PC-3 (cell line): ENCODE measurements at regions of chr3 and their contacts with region 1.

Region 1: GRCh38 chr3:171459942-171460724 is at the start of gene TNIK:
- DNase-seq: peak; percentile 88
- ATAC-seq: peak; percentile 82
- H3K4me3 ChIP-seq: peak within 1 kb of the TSS; percentile 84
- H3K27ac ChIP-seq: peak within 1 kb of the TSS; percentile 62
- H3K4me1 ChIP-seq: peaks cover 30% of the 10 kb centered on the region
- H3K27me3 ChIP-seq: no peaks in the 10 kb centered on the region
- CTCF ChIP-seq: no peak
- total RNA-seq, gene TNIK: 7.0 and 12.0 TPM in 2 replicates

Region 2: GRCh38 chr3:170961616-170962400 is 498.3 kb before region 1 on chr3:
- CTCF ChIA-PET with region 1: no interaction called
- POLR2A ChIA-PET with region 1: no interaction called
- intact Hi-C with region 1: loop called (anchors 5 kb)
- DNase-seq: peak; percentile 74
- ATAC-seq: peak; percentile 55
- H3K4me3 ChIP-seq: no peak overlapping the region
- H3K27ac ChIP-seq: no peak overlapping the region
- H3K4me1 ChIP-seq: no peaks in the 10 kb centered on the region
- H3K27me3 ChIP-seq: no peaks in the 10 kb centered on the region
- CTCF ChIP-seq: peak; percentile 91

Region 3: GRCh38 chr3:171261446-171261845 is 198.7 kb before region 1 on chr3:
- CTCF ChIA-PET with region 1: no interaction called
- POLR2A ChIA-PET with region 1: no interaction called
- intact Hi-C with region 1: loop called (anchors 2 kb)
- DNase-seq: peak; percentile 78
- ATAC-seq: peak; percentile 97
- H3K4me3 ChIP-seq: peak overlapping the region; percentile 20
- H3K27ac ChIP-seq: peak overlapping the region; percentile 69
- H3K4me1 ChIP-seq: peaks cover 31% of the 10 kb centered on the region
- H3K27me3 ChIP-seq: no peaks in the 10 kb centered on the region
- CTCF ChIP-seq: no peak

Region 4: DNA sequence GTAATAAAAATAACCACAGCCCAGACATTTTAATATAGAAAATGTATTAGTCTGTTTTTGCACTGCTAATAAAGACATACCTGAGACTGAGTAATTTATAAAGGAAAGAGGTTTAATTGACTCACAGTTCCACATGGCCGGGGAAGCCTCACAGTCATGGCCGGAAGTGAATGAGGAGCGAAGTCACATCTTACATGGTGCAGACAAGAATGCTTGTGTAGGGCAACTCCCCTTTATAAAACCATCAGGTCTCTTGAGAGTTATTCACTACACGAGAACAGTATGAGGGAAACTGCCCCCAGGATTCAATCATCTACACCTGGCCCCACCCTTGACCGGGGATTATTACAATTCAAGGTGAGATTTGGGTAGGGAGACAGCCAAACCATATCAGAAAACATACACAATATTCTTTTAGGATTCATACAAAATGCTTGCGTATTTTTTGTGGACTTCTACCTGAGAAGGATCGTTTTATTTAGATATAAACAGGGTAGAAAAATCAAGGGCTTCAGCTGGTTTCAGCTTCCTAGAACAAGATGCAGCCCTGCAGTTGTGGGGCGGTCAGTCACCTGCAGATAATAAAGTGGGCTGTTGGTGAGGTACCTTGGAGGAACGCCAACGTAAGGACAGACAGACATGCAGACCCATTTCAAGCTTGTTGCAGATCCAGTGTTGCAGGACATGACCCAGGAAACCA is 101.8 kb before region 1 on chr3:
- CTCF ChIA-PET with region 1: no interaction called
- POLR2A ChIA-PET with region 1: no interaction called
- intact Hi-C with region 1: loop called (anchors 5 kb)
- DNase-seq: peak; percentile 65
- ATAC-seq: peak; percentile 8; the same call in 1 of the 2 replicates
- H3K4me3 ChIP-seq: no peak overlapping the region
- H3K27ac ChIP-seq: peak overlapping the region; percentile 88
- H3K4me1 ChIP-seq: peaks cover 53% of the 10 kb centered on the region
- H3K27me3 ChIP-seq: no peaks in the 10 kb centered on the region
- CTCF ChIP-seq: no peak

Region 5: DNA sequence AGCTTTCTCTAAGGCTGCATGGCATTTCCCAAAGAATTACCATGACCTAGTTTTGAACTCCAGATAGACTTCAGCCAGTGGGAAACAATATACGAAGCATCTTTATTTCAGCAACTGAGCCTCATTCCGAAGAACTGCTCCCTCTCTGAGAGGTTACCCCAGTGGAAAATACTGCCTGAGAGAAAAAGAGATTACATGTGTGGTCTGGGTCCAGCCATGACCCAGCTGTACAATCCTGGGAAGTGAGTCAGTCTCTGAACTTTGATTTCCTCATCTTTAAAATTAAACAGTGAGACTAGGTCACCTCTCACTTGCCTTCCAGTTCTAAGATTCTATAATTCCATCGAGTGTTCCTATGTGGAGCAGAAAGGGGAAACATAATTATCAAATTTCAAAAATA is 42.3 kb before region 1 on chr3:
- CTCF ChIA-PET with region 1: no interaction called
- POLR2A ChIA-PET with region 1: no interaction called
- intact Hi-C with region 1: no loop called
- DNase-seq: peak; percentile 49
- ATAC-seq: peak; percentile 63
- H3K4me3 ChIP-seq: no peak overlapping the region
- H3K27ac ChIP-seq: no peak overlapping the region
- H3K4me1 ChIP-seq: peaks cover 9% of the 10 kb centered on the region; the same call in 1 of the 2 replicates
- H3K27me3 ChIP-seq: no peaks in the 10 kb centered on the region
- CTCF ChIP-seq: no peak

Region 6: DNA sequence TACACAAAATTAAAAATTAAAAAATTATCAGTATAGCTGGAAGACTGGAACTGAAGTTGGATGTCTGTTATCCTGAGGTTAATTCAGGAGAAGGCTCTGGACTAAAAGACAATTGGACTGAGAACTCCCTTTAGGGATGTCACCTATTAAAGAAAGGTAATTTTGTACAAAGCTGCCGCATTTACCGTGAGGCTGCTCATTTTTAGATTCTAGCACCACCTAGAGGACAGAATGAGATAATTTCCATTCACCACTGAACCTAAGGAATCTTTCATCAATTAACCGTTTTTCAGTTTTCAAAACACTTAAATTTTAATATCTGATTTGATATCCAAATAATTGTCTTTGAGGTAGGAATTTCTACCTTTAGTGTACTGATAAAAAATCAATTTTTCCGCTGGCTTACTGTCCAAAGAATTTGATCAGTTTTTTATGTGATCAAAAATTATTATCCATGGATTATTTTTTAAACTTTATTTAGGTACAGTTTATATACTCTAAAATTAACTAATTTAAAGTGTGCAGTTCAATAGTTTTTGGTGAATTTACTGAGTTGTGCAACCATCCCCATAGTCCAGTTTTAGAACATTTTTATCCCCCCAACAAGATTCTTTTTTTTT is 106.8 kb after region 1 on chr3:
- CTCF ChIA-PET with region 1: no interaction called
- POLR2A ChIA-PET with region 1: no interaction called
- intact Hi-C with region 1: loop called (anchors 2 kb)
- DNase-seq: peak; percentile 76
- ATAC-seq: peak; percentile 56; the same call in 1 of the 2 replicates
- H3K4me3 ChIP-seq: no peak overlapping the region
- H3K27ac ChIP-seq: no peak overlapping the region
- H3K4me1 ChIP-seq: peaks cover 23% of the 10 kb centered on the region
- H3K27me3 ChIP-seq: no peaks in the 10 kb centered on the region
- CTCF ChIP-seq: peak; percentile 91

Region 7: DNA sequence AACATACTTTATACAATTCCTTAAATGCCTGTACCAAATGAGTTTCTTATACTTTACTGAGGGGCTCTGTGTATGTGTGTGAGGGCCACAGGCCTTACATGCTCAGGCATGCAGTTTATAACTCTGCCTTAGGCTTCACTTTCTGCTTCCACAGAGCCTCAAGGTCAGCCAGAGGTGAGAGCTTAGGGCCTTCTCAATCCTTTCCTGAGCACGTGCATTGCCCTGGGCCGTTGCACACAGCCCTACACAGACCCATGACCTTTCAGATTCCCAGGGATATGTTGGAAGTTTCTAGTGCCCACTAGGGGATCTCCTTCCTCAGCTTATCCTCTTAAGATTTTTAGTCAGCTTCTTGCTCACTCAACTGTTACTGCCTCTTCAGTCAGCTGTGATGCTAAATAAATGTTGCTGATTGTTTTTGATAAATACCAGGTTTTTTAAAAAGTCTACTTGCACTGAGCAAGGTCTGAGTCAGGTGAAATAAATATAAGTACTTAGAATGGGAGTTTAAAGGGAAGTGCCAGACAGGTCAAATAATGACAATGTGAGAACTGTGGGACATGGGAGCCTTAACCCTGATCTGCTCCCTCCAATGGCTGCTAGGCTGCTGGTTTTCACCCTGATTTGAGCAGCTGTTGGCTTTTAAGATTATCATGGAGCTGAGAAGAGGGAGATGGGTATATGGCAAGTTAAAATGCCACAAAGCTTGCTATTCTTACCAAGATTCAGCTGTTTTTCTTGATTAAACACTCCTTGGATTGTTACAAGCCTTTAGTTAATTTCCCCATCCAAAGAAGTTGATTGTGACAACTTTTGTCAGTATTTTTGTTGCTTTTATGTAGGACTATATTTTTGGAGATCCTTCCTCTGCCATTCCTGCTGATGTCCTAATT is 180.6 kb after region 1 on chr3:
- CTCF ChIA-PET with region 1: no interaction called
- POLR2A ChIA-PET with region 1: no interaction called
- intact Hi-C with region 1: no loop called
- DNase-seq: peak; percentile 17
- ATAC-seq: peak; percentile 45
- H3K4me3 ChIP-seq: no peak overlapping the region
- H3K27ac ChIP-seq: no peak overlapping the region
- H3K4me1 ChIP-seq: no peaks in the 10 kb centered on the region
- H3K27me3 ChIP-seq: no peaks in the 10 kb centered on the region
- CTCF ChIP-seq: peak; percentile 43